ENCODE measurements at regions of chr17 and their contacts with region 1.

Region 1: DNA sequence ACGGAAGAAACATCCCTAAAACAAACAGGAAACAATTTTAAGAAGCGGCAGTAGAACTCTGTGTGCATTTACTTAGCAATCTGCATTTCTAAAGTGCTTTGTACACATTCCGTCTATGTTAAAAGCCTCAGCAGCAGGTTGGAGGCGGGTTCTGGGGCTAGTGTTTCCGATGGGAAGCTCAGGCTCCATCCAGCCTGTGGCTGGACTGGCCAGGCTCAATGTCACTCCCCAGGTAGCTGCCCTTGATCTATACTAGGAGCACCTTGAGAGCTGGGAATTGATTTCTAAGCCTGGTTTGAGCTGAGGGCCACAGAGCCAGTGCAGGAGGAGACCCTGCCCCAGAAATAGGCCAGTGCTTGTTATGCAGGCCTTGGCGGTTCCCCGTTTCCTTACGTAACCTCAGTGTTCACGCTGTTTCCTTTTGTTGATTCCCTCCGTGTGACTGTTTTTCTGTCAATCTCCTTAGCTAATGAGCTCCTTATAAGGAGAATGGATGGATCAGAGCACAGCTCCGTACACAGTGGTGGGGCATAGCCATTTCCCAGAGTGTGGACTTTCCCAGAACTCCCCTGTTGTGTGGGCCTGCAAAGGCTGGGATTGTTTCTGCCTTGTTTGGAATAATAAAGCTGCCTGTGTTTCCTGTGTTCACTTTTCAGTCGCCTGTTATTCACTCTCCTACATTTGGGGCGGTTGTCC is 21.4 kb downstream of the ADORA2B start:
- DNase-seq: peak; percentile 93
- ATAC-seq: peak; percentile 83
- H3K4me3 ChIP-seq: peak overlapping the region; percentile 7; the same call in 1 of the 2 replicates
- H3K27ac ChIP-seq: peak overlapping the region; percentile 94
- H3K4me1 ChIP-seq: peaks cover 55% of the 10 kb centered on the region
- H3K27me3 ChIP-seq: no peaks in the 10 kb centered on the region
- CTCF ChIP-seq: no peak

Region 2: GRCh38 chr17:15944759-15945529 is 21.4 kb before region 1 on chr17 and contains the start of gene ADORA2B:
- CTCF ChIA-PET with region 1: interaction called, 3 read pairs
- POLR2A ChIA-PET with region 1: interaction called, 5 read pairs
- intact Hi-C with region 1: loop called (anchors 1 kb)
- DNase-seq: peak; percentile 86
- ATAC-seq: peak; percentile 62
- H3K4me3 ChIP-seq: peak within 1 kb of the TSS; percentile 81
- H3K27ac ChIP-seq: peak within 1 kb of the TSS; percentile 83
- H3K4me1 ChIP-seq: peaks cover 57% of the 10 kb centered on the region
- H3K27me3 ChIP-seq: no peaks in the 10 kb centered on the region
- CTCF ChIP-seq: peak; percentile 61
- total RNA-seq, gene ADORA2B: 118 and 130 TPM in 2 replicates